ENCODE measurements at regions of chr12 and their contacts with region 1.

Region 1: DNA sequence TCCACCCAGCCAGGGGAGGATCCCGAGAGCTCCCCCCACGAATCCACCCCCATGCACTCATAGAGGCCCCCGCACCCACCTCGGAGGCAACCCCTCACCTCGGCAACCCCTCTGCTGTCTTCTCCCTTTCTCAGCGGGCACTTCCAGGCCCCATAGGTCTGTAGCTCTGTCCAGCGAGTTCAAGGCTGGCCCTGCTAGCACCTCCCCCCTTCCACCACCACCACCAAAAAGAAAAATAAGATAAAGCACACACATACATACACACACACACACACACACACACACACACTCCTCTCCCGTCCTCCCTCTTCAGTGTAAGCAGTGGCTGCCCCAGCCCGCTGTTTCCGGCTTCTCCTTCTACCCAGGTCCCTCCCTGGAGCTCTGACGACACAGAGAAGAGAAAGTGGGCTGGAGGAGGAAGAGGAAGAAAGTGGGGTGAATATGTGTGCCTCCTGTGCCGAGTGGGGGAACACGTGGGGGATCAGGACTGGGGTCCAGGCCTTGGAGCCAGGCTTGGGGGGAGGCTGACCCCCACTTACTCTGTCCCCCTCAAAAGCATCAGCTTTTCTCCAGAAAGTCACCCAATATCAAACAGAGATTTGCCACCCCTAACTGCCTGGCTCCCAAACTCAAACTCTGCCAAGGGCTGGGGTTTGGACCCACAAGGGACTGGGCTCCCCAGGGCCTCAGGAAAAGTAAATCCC is at the start of gene STAT6:
- DNase-seq: peak; percentile 71
- ATAC-seq: peak; percentile 66
- H3K4me3 ChIP-seq: peak within 1 kb of the TSS; percentile 72 to 91 (median 87)
- H3K27ac ChIP-seq: peak within 1 kb of the TSS; percentile 82
- H3K4me1 ChIP-seq: peaks cover 46% of the 10 kb centered on the region
- H3K27me3 ChIP-seq: no peaks in the 10 kb centered on the region; a peak in 1 of 5 replicates
- CTCF ChIP-seq: no peak
- EP300 ChIP-seq: no peak; a peak in 1 of 4 replicates
- POLR2A ChIP-seq: peak in 1 of 2 experiments; percentile 55; a peak in 1 of 4 replicates
- RAD21 ChIP-seq: no peak
- total RNA-seq, gene STAT6: 19.4 and 28.0 TPM in 2 replicates

Region 2: GRCh38 chr12:57005980-57006808 is 105.0 kb before region 1 on chr12 and contains the start of gene ZBTB39:
- CTCF ChIA-PET with region 1: interaction called, 4 read pairs
- POLR2A ChIA-PET with region 1: interaction called, 7 read pairs
- in situ Hi-C with region 1: loop called (anchors 5 kb)
- intact Hi-C with region 1: loop called (anchors 2 kb)
- DNase-seq: peak; percentile 20
- ATAC-seq: peak; percentile 63
- H3K4me3 ChIP-seq: peak within 1 kb of the TSS; percentile 88 to 98 (median 93)
- H3K27ac ChIP-seq: peak within 1 kb of the TSS; percentile 49
- H3K4me1 ChIP-seq: peaks cover 57% of the 10 kb centered on the region
- H3K27me3 ChIP-seq: no peaks in the 10 kb centered on the region; a peak in 2 of 5 replicates
- CTCF ChIP-seq: peak; percentile 66
- EP300 ChIP-seq: no peak
- POLR2A ChIP-seq: peak; percentile 54 to 68; a peak in 3 of 4 replicates
- RAD21 ChIP-seq: no peak
- total RNA-seq, gene ZBTB39: 6.5 and 8.1 TPM in 2 replicates

Region 3: GRCh38 chr12:57069523-57069922 is 41.7 kb before region 1 on chr12:
- CTCF ChIA-PET with region 1: interaction called, 76 read pairs
- POLR2A ChIA-PET with region 1: interaction called, 118 read pairs
- in situ Hi-C with region 1: loop called (anchors 5 kb)
- intact Hi-C with region 1: loop called (anchors 1 kb)
- DNase-seq: peak; percentile 81
- ATAC-seq: peak; percentile 97
- H3K4me3 ChIP-seq: no peak overlapping the region
- H3K27ac ChIP-seq: no peak overlapping the region
- H3K4me1 ChIP-seq: no peaks in the 10 kb centered on the region
- H3K27me3 ChIP-seq: no peaks in the 10 kb centered on the region
- CTCF ChIP-seq: peak; percentile 90
- EP300 ChIP-seq: no peak
- POLR2A ChIP-seq: no peak
- RAD21 ChIP-seq: peak; percentile 94

Region 4: GRCh38 chr12:57124259-57124877 is 13.2 kb after region 1 on chr12:
- CTCF ChIA-PET with region 1: no interaction called
- POLR2A ChIA-PET with region 1: interaction called, 90 read pairs
- in situ Hi-C with region 1: no loop called
- intact Hi-C with region 1: loop called (anchors 1 kb)
- DNase-seq: peak; percentile 73
- ATAC-seq: peak; percentile 49
- H3K4me3 ChIP-seq: no peak overlapping the region
- H3K27ac ChIP-seq: no peak overlapping the region
- H3K4me1 ChIP-seq: peaks cover 10% of the 10 kb centered on the region
- H3K27me3 ChIP-seq: no peaks in the 10 kb centered on the region; a peak in 1 of 5 replicates
- CTCF ChIP-seq: peak; percentile 91
- EP300 ChIP-seq: no peak
- POLR2A ChIP-seq: no peak
- RAD21 ChIP-seq: peak; percentile 90

Region 5: GRCh38 chr12:57151741-57152630 is 40.8 kb after region 1 on chr12:
- CTCF ChIA-PET with region 1: no interaction called
- POLR2A ChIA-PET with region 1: interaction called, 64 read pairs
- in situ Hi-C with region 1: no loop called
- intact Hi-C with region 1: no loop called
- DNase-seq: no peak
- ATAC-seq: no peak
- H3K4me3 ChIP-seq: no peak overlapping the region
- H3K27ac ChIP-seq: no peak overlapping the region
- H3K4me1 ChIP-seq: peaks cover 87% of the 10 kb centered on the region
- H3K27me3 ChIP-seq: no peaks in the 10 kb centered on the region
- CTCF ChIP-seq: no peak
- EP300 ChIP-seq: no peak
- POLR2A ChIP-seq: 0 out of 4 replicates have a peak, but pooled peaks of 1 of the 2 experiments have one; percentile 18
- RAD21 ChIP-seq: no peak

Region 6: GRCh38 chr12:57229634-57230380 is 118.6 kb after region 1 on chr12 and contains the start of gene SHMT2:
- CTCF ChIA-PET with region 1: no interaction called
- POLR2A ChIA-PET with region 1: interaction called, 22 read pairs
- in situ Hi-C with region 1: no loop called
- intact Hi-C with region 1: no loop called
- DNase-seq: peak; percentile 95
- ATAC-seq: peak; percentile 73
- H3K4me3 ChIP-seq: peak within 1 kb of the TSS; percentile 71 to 82 (median 75)
- H3K27ac ChIP-seq: peak within 1 kb of the TSS; percentile 95
- H3K4me1 ChIP-seq: peaks cover 81% of the 10 kb centered on the region
- H3K27me3 ChIP-seq: peaks cover 0 to 21% of the 10 kb centered on the region in 2 experiments; a peak in 4 of 5 replicates
- CTCF ChIP-seq: no peak; the same call in 1 of the 2 replicates
- EP300 ChIP-seq: no peak
- POLR2A ChIP-seq: peak in 1 of 2 experiments; percentile 68; a peak in 2 of 4 replicates
- RAD21 ChIP-seq: no peak
- total RNA-seq, gene SHMT2: 181 and 184 TPM in 2 replicates